ENCODE measurements at regions of chr15 and their contacts with region 1.

Region 1: DNA sequence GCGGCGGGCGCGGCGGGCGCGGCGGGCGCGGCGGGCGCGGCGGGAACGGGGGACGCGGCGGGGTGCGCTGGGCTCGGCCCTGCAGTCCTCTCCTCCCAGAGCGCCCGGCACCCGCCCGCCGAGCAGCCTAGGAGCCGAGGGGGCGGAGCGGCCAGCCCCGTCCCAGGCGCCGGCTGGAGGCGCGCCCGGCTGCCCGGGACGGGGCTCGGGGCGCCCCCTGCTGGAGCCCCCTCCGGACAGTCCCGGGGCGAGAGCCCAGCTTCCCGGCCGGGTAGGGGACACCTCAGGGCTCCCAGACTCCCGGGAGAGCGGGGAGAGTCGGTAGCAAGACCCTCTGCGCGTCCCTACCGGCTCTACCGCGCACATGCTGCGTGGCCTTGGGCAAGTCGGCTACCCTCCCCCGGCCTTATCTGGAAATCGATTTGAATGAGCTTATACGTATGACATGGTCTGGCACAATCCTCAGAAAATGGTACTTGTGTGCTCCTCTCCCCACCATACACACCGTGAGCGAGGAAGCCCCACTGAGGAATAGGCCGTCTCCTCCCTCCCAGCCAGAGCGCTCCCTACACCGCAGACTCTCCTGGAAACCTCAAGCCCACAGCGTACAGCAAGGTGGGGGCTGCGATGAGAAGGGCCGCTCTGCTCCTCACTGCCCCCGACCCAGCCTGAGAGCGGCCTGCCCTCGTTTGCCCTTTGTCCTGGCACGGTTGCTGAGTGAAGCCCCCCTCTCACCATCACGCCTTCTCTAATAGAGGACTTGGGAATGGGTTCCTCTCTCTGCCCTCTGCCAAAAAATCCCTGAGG is at the start of gene DAPK2:
- DNase-seq: peak; percentile 69
- ATAC-seq: peak; percentile 59
- H3K4me3 Mint-ChIP-seq: peak within 1 kb of the TSS; percentile 76
- H3K27ac Mint-ChIP-seq: peak within 1 kb of the TSS; percentile 7
- H3K4me1 Mint-ChIP-seq: peaks cover 68% of the 10 kb centered on the region
- H3K27me3 Mint-ChIP-seq: no peaks in the 10 kb centered on the region
- CTCF ChIP-seq: no peak
- total RNA-seq, gene DAPK2: 4.2 and 4.3 TPM in 2 replicates

Region 2: DNA sequence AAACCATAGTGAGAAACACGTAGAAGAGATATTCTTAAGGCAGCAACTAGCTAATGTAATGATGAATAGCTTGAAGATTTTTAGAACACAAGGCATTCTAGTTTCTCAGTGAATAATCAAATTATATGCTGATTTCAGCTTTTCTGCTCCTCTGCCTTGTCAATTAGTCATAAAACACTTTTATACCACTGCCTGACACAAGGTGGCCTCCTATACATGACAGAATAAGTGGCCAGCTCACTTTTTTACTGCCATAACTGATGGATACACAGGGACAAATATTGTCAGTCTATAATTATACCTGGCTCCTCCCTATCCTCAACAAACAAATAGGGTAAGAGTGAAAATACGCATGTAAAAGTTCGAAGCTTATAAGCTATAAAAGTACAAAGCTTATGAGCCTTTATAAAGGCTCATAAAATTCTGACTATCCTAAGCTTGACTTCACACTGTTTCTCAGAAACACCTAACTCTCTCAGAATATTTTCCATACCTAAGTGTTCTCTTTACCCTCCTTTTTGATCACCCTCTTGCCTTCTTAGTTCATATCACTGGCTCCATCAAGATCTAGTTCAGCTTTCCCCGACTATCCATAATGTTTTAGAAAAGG is 294.4 kb before region 1 on chr15:
- CTCF ChIA-PET with region 1: interaction called, 50 read pairs
- POLR2A ChIA-PET with region 1: interaction called, 9 read pairs
- intact Hi-C with region 1: no loop called
- DNase-seq: no peak
- ATAC-seq: peak; percentile 83
- H3K4me3 Mint-ChIP-seq: no peak overlapping the region
- H3K27ac Mint-ChIP-seq: peak overlapping the region; percentile 59
- H3K4me1 Mint-ChIP-seq: peaks cover 3% of the 10 kb centered on the region
- H3K27me3 Mint-ChIP-seq: no peaks in the 10 kb centered on the region
- CTCF ChIP-seq: no peak

Region 3: DNA sequence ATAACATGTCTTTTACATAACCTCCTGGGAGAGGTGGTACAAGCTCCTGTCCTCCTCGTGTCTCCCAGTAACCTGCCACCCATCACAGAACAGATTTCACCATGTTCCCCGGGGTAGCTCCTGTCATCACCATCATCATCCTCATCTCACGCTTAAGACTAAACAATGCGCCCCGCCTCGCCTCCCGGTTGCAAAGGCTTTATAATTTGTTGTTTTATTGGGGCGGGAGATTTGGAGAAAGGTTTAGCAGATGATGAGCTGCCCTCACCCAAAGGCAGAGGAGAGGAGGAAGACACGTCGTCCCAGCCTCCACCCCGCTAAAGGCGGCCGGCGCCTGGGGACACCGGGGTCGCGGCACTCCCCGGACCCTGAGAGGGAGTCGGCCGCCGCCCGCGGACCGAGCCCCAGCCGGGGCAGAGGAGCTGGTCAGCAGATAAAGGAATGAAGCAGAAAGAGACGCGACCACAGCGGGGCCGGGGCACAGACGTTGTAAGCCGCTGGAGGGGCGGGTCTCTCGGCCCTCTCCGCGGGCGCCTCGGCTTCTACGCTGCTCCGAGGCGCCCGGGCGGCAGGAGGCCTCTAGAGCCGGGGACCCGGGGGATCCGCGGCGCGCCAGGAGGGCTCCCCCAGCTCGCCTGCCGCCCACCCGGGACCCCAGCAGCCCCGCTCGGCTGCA is 213.4 kb before region 1 on chr15:
- CTCF ChIA-PET with region 1: interaction called, 3 read pairs
- POLR2A ChIA-PET with region 1: interaction called, 6 read pairs
- intact Hi-C with region 1: loop called (anchors 5 kb)
- DNase-seq: peak; percentile 44
- ATAC-seq: peak; percentile 43
- H3K4me3 Mint-ChIP-seq: peak overlapping the region; percentile 97
- H3K27ac Mint-ChIP-seq: peak overlapping the region; percentile 74
- H3K4me1 Mint-ChIP-seq: peaks cover 48% of the 10 kb centered on the region
- H3K27me3 Mint-ChIP-seq: no peaks in the 10 kb centered on the region
- CTCF ChIP-seq: no peak

Region 4: DNA sequence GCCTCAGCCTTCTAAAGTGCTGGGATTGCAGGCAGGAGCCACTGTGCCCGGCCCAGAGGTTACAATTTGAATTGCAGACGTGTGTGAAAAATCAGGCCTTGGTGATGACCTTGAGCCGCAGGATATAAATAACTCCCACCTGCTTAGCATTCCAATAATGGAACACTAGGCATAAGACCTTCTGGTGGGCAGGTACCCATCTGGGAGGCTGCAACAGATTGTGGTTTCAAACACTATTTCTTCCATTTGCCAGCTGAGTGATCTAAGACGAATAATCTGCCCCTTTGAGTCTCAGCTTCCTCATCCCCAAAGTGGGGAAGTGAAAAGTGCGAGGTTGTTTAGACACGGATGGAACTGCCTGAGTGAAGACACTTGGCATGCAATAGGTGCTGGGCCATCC is 165.1 kb before region 1 on chr15:
- CTCF ChIA-PET with region 1: no interaction called
- POLR2A ChIA-PET with region 1: interaction called, 4 read pairs
- intact Hi-C with region 1: loop called (anchors 2 kb)
- DNase-seq: no peak
- ATAC-seq: peak; percentile 84
- H3K4me3 Mint-ChIP-seq: peak overlapping the region; percentile 61
- H3K27ac Mint-ChIP-seq: peak overlapping the region; percentile 86
- H3K4me1 Mint-ChIP-seq: peaks cover 68% of the 10 kb centered on the region
- H3K27me3 Mint-ChIP-seq: no peaks in the 10 kb centered on the region
- CTCF ChIP-seq: no peak

Region 5: DNA sequence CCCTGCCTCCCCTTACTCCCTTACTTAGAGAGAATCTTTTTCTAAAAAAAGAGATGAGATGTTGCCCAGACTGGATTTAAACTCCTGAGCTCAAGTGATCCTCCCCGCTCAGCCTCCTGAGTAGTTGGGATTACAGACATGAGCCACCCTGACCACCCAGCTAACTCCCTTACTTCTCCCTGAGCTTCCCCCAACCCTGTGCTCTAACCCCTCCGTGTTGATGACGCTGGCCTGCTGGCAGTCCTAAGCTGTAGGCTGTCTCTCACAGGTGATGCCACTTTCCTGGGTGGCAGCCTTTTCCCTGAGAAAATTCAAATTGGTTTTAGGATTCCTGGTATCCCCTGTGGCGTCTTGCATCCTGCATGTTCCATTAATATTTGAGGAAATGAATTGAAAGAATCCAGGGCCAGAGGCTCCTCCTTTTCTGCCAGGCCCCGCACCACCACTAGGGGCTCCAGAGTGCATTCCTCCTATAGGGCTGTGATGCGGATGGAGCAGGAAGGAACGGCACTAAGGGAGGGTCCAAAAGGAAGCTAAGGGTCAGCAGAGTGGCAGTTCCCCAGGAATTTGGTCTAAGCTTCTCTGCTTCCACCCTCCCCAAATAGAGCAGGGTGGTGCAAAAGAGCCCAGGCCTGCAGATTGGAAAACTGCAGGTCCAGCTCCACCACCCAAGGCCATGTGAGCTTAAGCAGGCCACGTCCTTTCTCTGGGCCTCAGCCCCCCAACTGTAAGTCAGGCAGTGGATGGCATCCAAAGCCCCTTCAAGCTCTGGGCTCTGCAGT is 101.4 kb before region 1 on chr15:
- CTCF ChIA-PET with region 1: interaction called, 39 read pairs
- POLR2A ChIA-PET with region 1: interaction called, 3 read pairs
- intact Hi-C with region 1: loop called (anchors 1 kb)
- DNase-seq: peak; percentile 52
- ATAC-seq: peak; percentile 89
- H3K4me3 Mint-ChIP-seq: no peak overlapping the region
- H3K27ac Mint-ChIP-seq: no peak overlapping the region
- H3K4me1 Mint-ChIP-seq: peaks cover 31% of the 10 kb centered on the region
- H3K27me3 Mint-ChIP-seq: no peaks in the 10 kb centered on the region
- CTCF ChIP-seq: peak; percentile 70

Region 6: DNA sequence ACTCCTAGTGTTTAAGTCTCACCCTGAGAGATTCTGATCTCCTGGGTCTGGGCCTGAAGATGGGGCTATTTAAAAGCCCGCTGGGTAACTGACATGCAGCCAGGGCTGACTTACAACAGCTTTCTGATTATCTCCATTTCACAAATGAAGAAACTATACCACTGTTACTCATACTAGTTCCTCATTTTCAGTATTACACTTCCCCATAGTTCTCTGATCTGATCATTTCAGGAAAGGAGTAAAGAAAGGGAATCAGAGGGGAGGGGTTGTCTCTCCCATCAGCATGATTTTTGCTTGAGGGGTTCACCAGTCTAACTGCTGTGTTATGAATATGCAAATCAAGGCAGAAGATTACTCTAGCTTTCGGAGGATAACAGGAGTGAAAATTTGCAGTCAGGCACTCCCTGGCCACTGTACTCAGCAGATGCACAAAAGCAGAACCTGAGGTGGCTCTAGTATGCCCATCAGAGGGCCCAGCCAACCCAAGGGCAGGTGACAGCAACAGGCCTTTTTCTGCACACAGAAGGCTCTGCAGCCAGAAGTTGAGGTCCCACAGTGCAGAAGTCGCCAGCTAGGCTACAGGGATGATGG is 59.7 kb before region 1 on chr15:
- CTCF ChIA-PET with region 1: interaction called, 14 read pairs
- POLR2A ChIA-PET with region 1: interaction called, 4 read pairs
- intact Hi-C with region 1: loop called (anchors 1 kb)
- DNase-seq: no peak
- ATAC-seq: peak; percentile 82
- H3K4me3 Mint-ChIP-seq: peak overlapping the region; percentile 61
- H3K27ac Mint-ChIP-seq: peak overlapping the region; percentile 86
- H3K4me1 Mint-ChIP-seq: peaks cover 60% of the 10 kb centered on the region
- H3K27me3 Mint-ChIP-seq: no peaks in the 10 kb centered on the region
- CTCF ChIP-seq: no peak

Region 7: DNA sequence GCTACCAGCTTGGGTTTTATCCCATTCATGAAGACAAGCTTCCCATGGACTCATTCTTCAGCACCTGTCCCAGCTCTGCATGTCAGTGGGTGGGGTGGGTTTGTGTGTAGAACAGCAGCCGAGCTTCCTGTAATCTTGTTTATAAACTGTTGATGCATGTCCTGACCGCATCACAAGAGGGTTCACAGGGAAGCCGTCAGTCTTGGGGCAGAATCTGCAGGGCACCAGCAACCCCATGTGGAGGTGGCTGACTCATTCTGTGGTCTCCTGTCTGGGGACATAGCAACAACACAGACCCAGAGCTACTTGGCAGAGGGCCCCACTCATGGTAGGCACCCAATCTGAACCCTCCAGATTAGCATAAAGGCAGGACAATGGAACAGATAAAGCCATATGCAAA is 35.8 kb before region 1 on chr15:
- CTCF ChIA-PET with region 1: interaction called, 27 read pairs
- POLR2A ChIA-PET with region 1: interaction called, 16 read pairs
- intact Hi-C with region 1: loop called (anchors 1 kb)
- DNase-seq: peak; percentile 61
- ATAC-seq: peak; percentile 97
- H3K4me3 Mint-ChIP-seq: peak overlapping the region; percentile 69
- H3K27ac Mint-ChIP-seq: peak overlapping the region; percentile 89
- H3K4me1 Mint-ChIP-seq: peaks cover 32% of the 10 kb centered on the region
- H3K27me3 Mint-ChIP-seq: no peaks in the 10 kb centered on the region
- CTCF ChIP-seq: no peak

Measured in activated B cell treated with CpG ODN at 0.5 μM for 24 hours (primary cell).